OCI-LY7 (cell line): ENCODE measurements at regions of chr17 and their contacts with region 1.

Region 1: DNA sequence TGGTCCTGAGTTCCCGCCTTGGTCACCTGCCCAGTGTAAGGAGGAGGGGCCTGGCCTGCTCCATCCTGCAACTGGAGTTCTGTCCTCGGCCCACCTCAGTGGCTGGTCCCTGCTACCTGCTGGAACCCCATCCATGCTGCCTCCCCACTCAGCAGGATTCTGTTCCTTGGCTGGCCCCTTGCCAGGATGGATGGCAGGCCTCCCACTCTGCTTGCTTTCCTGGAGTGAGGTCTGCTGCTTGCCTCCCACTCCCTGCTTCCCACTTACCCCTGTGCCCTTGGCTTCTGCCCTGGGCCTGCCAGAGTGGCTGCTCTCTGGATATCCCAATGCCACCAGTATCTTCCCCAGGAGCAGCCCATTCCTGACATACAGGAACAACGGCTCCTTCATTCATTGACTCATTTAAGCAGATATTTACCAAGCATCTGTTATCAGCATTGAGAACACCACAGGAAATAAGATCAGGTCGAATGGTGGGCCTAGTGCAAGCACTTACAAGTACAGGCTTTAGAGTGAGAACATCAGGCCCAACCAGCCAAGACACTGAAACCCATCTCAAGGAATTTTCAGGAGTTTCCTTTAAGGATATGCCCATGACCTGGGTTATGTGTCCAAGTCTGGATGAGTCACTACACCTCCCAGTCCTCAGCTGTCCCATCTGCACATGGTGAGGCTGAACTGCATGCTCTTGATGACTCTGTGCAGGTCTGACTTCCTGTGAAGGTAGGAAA is 17.0 kb upstream of the RPRML start:
- DNase-seq: peak; percentile 49
- H3K4me3 ChIP-seq: no peak overlapping the region
- H3K27ac ChIP-seq: no peak overlapping the region
- H3K4me1 ChIP-seq: peaks cover 51% of the 10 kb centered on the region
- CTCF ChIP-seq: no peak

Region 2: GRCh38 chr17:46940621-46941404 is 55.2 kb before region 1 on chr17:
- CTCF ChIA-PET with region 1: interaction called, 6 read pairs
- POLR2A ChIA-PET with region 1: interaction called, 9 read pairs
- intact Hi-C with region 1: loop called (anchors 1 kb)
- DNase-seq: peak; percentile 86
- H3K4me3 ChIP-seq: no peak overlapping the region
- H3K27ac ChIP-seq: no peak overlapping the region
- H3K4me1 ChIP-seq: peaks cover 10% of the 10 kb centered on the region
- CTCF ChIP-seq: peak; percentile 87

Region 3: GRCh38 chr17:46977348-46977747 is 18.7 kb before region 1 on chr17:
- CTCF ChIA-PET with region 1: no interaction called
- POLR2A ChIA-PET with region 1: interaction called, 5 read pairs
- intact Hi-C with region 1: loop called (anchors 2 kb)
- DNase-seq: peak; percentile 72
- H3K4me3 ChIP-seq: peak overlapping the region; percentile 70
- H3K27ac ChIP-seq: no peak overlapping the region
- H3K4me1 ChIP-seq: peaks cover 37% of the 10 kb centered on the region
- CTCF ChIP-seq: peak; percentile 34

Region 4: DNA sequence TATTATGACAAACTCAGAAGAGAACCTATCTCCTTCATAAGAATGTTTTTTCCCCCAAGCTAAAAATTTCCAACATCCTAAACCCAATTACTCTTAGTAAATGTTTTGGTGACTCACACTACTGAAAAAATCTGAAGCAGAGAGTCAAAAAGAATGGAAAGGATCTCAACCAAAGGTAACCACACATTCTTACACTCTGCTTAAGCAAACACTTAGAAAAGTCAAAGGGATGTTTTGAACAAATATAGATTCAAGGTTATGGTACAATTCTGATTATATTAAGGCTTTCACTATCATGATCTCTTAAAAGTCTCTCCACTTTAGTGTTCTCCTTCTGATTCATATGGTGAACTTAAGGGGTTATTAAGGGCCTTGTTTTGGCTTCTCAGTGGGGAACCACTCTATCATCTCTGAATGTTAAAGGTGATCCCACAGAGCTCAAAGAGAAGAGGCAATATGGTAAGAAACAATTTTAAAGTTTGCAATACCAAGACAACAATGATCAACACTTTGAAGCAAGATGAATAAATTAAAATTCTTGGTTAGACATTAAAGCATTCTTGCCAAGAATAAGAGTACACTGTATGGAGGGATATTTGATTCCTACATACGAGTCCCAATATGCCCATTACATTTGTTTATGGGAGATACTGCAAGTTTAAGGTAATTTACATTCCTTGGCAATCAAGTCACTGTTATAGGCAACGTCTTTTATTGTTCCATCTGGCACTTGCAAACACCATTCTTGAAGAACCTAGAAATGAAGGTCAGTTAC is 123.9 kb after region 1 on chr17:
- CTCF ChIA-PET with region 1: no interaction called
- POLR2A ChIA-PET with region 1: no interaction called
- intact Hi-C with region 1: no loop called
- DNase-seq: no peak
- H3K4me3 ChIP-seq: no peak overlapping the region
- H3K27ac ChIP-seq: no peak overlapping the region
- H3K4me1 ChIP-seq: no peaks in the 10 kb centered on the region
- CTCF ChIP-seq: no peak